Posterior vena cava (tissue), 2 donors: ENCODE measurements at regions of chr17 and their contacts with region 1.

Region 1: DNA sequence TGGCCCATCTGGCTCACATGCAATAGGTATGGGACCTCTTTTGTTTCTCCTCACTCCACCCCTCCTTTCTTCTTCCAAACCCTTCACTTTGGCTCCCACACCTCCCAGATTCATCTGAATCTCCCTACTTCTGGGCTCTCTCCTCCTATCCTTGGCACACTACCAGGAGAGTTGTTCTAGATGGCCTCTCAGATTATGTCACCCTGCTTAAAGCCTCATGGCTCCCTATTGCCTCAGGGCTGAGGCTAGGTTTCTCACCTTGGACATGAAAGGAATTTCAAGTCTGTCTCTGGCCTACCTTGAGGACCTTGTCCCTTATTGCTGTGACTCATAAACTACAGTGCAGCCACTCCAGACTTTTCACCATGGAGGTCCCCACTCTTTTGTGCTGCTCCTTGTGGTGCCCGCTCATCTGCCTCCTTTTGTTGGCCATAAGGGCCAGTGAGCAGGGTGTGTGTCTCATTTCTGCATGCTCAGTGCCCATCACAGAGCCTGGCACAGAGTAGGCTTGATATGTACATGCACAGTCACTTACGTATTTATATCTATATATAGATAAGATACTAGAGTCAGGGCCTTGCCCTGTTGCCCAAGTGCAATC is 1.0 kb upstream of the MFAP4 start:
- DNase-seq: peak; percentile 80

Region 2: DNA sequence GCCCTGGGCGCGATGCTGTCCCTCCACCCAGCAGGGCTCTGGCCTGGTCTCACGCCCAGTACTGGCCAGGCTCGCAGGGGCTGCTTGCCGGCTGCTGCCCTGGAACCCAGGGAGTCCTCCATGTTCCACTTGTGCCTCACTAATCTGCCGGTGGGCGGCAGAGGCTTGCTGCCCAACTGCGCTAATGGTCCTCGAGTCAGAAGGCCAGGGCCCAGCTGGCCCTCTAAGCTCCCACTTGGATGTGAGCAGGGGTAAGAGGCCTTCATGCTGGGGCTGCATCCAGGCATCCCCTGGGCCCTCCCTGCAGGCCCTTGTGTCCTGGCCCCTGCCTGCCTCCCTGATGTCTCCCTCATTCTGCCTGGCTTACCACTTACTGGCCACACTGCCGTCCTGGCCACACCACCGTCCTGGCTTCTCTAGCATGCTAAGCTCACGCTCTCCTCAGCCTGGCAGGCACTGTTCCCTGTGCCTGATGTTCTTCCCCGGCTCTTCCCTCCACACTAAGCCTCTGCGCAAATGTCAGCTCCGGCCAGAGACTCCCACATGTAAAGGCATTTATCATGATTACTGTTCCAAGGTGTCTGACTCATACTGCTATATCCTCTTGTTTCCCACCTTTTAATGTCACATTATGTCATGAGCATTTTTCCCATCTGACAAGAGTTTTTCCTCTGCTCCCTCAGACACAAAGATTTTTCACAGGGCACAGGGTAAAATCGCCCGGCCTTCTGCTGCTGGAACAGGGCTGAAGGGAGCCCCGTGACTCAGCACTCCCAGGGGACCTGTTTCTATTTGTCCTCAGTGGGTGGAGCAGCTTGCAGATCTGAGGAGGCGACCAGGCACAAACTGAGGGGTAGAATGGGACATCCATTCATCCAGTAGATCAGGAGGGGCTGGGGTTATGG is 41.4 kb before region 1 on chr17:
- intact Hi-C with region 1: loop called in 1 of 2 experiments (anchors 1 kb)
- DNase-seq: peak; percentile 94

Region 3: GRCh38 chr17:19410875-19411620 is 23.0 kb after region 1 on chr17 and contains the start of gene RNF112:
- intact Hi-C with region 1: loop called in 1 of 2 experiments (anchors 2 kb)
- DNase-seq: peak; percentile 86
- total RNA-seq, gene RNF112: 8.4 to 12.6 TPM

Region 4: DNA sequence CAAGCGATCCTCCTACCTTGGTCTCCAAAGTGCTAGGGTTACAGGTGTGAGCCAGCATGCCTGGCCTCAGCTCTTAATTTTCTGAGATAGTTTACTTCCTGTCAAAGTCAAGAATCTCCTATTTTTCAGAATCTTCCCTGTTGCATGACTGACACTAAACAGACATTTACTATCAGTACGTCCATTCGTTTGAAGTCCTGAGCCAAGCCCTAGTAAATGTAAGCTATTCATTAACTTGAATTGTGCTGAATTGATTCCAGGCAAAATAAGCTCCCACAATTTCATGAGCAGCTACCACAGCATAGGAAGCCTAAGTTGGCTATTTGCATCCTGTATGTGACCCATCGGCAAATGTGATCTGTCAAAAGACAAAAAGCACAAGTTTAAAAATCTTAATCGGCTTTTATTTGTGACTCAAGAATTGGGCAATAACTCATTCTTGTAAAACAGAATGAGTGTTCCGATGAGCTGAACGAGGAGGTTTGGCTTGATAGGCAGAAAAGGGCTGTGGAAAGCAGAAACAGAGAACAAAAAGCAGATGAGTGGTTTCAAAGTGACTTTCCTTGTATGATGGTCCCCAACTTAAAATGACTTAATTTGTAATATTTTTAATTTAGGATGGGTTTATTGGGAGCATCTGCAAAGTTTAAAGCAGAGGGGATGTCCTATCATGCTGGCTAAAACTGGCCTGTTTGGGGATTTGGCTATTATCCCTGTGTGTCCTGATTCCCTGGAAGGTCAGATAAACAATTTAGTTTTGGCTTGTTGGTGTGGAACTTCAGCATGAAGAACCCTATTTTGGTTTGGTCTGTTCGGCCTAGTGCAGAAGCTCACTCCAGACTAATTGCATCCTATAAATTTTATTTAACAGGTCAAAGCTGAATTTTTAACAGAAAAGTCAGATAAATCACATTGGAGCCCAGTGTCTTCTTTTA is 37.2 kb after region 1 on chr17:
- intact Hi-C with region 1: no loop called
- DNase-seq: no peak